Ascending aorta (tissue), 2 donors: ENCODE measurements at regions of chr22 and their contacts with region 1.

Region 1: DNA sequence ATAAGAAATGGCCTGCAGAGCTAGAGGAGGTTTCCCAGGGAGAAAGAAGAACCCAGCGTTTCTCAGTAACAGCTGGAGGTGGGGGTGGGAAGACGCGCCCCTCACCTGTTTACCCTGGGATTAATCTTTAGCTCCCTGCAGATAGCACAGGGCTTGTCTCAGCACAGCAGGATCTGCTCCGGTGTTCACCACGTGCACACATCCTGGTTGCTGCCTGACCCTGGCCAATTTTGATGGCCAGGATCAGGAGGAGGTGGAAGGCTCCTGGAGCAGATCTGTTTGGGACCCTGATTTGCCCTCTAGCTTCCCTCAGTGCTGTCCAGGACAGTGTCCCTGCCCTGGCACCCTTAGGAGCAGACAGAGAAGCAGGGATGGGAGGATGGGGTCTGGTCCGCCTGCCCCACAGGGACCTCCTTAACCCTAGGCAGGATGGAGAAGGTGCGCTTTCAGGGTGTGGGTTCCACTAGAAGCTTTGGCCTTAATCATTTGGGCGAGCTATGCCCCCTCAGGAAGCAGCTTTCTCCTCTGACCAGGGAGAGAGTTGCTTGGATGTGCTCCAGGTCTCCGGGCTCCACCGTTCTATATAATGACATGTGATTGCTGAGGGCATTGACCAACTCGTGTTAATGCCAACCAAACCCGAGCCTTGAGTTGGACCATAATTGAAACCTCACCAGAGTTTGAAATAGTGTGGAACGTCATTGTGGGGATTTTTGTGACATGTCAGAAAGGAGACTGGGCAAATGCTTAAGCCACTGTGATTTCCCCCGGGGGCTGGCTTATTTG is 19.3 kb downstream of the UPB1 start:
- DNase-seq: no peak
- H3K4me3 ChIP-seq: no peak overlapping the region
- H3K27ac ChIP-seq: no peak overlapping the region
- H3K4me1 ChIP-seq: peaks cover 0 to 14% of the 10 kb centered on the region in 2 donors
- H3K27me3 ChIP-seq: no peaks in the 10 kb centered on the region
- CTCF ChIP-seq: no peak

Region 2: GRCh38 chr22:24146194-24146616 is 368.2 kb before region 1 on chr22:
- intact Hi-C with region 1: no loop called
- DNase-seq: no peak
- H3K4me3 ChIP-seq: peak overlapping the region; percentile 10 to 18
- H3K27ac ChIP-seq: peak overlapping the region; percentile 86 to 92
- H3K4me1 ChIP-seq: peaks cover 26 to 58% of the 10 kb centered on the region in 2 donors
- H3K27me3 ChIP-seq: no peaks in the 10 kb centered on the region
- CTCF ChIP-seq: no peak

Region 3: GRCh38 chr22:24289114-24289513 is 225.3 kb before region 1 on chr22:
- intact Hi-C with region 1: no loop called
- DNase-seq: no peak
- H3K4me3 ChIP-seq: peak overlapping the region; percentile 10
- H3K27ac ChIP-seq: peak overlapping the region; percentile 79 to 80
- H3K4me1 ChIP-seq: peaks cover 10 to 45% of the 10 kb centered on the region in 2 donors
- H3K27me3 ChIP-seq: no peaks in the 10 kb centered on the region
- CTCF ChIP-seq: no peak

Region 4: GRCh38 chr22:24465566-24465965 is 48.9 kb before region 1 on chr22:
- intact Hi-C with region 1: loop called (anchors 2 kb)
- DNase-seq: no peak
- H3K4me3 ChIP-seq: no peak overlapping the region
- H3K27ac ChIP-seq: no peak overlapping the region
- H3K4me1 ChIP-seq: peaks cover 7 to 9% of the 10 kb centered on the region in 2 donors
- H3K27me3 ChIP-seq: no peaks in the 10 kb centered on the region
- CTCF ChIP-seq: no peak

Region 5: DNA sequence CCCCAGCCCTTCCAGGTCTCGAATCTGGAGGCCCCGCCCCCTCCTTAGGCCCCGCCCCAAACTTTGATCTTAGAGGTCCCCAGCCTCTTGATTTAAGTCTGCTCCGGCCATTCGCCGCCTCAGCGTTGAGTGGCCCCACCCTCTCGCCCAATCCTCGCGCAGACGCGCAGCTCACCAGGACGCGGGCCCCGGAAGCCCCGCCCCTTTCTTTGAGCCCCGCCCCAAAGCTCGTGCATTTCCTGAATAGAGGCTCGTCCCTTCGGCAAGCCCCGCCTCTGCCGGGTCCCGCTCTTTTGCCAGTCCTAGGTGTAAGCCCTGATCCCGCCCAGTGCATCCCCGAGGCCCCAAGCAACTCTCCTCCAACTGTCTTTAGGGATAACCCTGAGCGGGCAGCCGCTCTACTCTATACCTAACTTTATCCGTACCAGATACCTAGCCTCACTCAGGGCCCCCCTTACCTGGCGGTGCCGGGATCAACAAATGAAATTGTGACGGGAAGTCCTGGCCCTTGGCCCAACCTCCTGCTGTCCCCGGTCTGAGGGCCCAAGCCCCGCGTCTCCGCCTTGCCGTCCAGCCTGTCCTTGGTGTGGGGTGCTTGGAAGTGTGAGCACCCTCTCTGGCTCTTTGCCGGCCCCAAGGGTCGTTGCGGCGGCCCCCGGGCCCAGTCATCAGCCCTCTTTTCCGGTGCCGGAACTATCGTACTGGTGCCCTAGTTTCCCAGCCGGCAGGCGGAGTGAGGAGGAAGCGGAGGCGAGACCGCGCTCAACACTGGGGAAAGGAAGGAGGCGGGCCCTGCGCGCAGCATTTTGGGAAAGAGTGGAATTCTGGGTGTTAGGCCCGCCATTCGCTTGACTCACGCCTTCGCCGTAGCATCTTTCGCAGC is 41.0 kb after region 1 on chr22 and contains the start of gene SNRPD3:
- intact Hi-C with region 1: no loop called
- DNase-seq: peak; percentile 99 to 100
- H3K4me3 ChIP-seq: peak within 1 kb of the TSS; percentile 81 to 93
- H3K27ac ChIP-seq: peak within 1 kb of the TSS; percentile 98 to 99
- H3K4me1 ChIP-seq: peaks cover 20 to 32% of the 10 kb centered on the region in 2 donors
- H3K27me3 ChIP-seq: no peaks in the 10 kb centered on the region
- CTCF ChIP-seq: no peak
- total RNA-seq, gene SNRPD3: 113 TPM